ENCODE measurements at regions of chr15 and their contacts with region 1.

Region 1: DNA sequence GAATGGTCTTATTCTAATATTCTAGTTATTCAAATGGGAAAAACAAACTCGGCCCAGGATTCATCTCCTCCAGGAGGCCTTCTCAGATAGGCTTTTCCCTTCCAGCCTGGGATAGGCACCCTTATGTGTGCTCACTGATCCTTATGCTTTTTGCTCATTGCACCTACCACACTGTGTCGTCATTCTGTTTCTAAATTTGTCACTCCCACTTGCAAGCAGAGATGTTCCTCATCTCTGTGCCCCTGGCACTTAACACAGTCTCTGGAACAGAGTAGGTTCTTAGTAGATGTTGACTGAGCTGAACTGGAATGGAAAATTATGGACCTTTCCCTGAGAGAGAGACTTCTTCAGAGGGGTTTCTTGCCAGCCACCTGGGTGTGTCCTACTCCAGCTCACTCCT is 18.7 kb upstream of the SPG11 start:
- DNase-seq: no peak
- ATAC-seq: peak; percentile 26
- H3K4me3 Mint-ChIP-seq: peak overlapping the region; percentile 60
- H3K27ac Mint-ChIP-seq: peak overlapping the region; percentile 91
- H3K4me1 Mint-ChIP-seq: peaks cover 76% of the 10 kb centered on the region
- H3K27me3 Mint-ChIP-seq: no peaks in the 10 kb centered on the region
- CTCF ChIP-seq: no peak

Region 2: GRCh38 chr15:44397869-44398268 is 284.3 kb before region 1 on chr15:
- CTCF ChIA-PET with region 1: no interaction called
- POLR2A ChIA-PET with region 1: no interaction called
- intact Hi-C with region 1: no loop called
- DNase-seq: no peak
- ATAC-seq: no peak
- H3K4me3 Mint-ChIP-seq: no peak overlapping the region
- H3K27ac Mint-ChIP-seq: no peak overlapping the region
- H3K4me1 Mint-ChIP-seq: peaks cover 2% of the 10 kb centered on the region
- H3K27me3 Mint-ChIP-seq: no peaks in the 10 kb centered on the region
- CTCF ChIP-seq: no peak

Region 3: GRCh38 chr15:44532689-44533088 is 149.5 kb before region 1 on chr15:
- CTCF ChIA-PET with region 1: no interaction called
- POLR2A ChIA-PET with region 1: no interaction called
- intact Hi-C with region 1: no loop called
- DNase-seq: no peak
- ATAC-seq: no peak
- H3K4me3 Mint-ChIP-seq: no peak overlapping the region
- H3K27ac Mint-ChIP-seq: peak overlapping the region; percentile 41
- H3K4me1 Mint-ChIP-seq: peaks cover 15% of the 10 kb centered on the region
- H3K27me3 Mint-ChIP-seq: no peaks in the 10 kb centered on the region
- CTCF ChIP-seq: no peak

Region 4: GRCh38 chr15:44670491-44670890 is 11.7 kb before region 1 on chr15:
- CTCF ChIA-PET with region 1: interaction called, 13 read pairs
- POLR2A ChIA-PET with region 1: interaction called, 60 read pairs
- intact Hi-C with region 1: no loop called
- DNase-seq: no peak
- ATAC-seq: peak; percentile 14
- H3K4me3 Mint-ChIP-seq: peak overlapping the region; percentile 42
- H3K27ac Mint-ChIP-seq: peak overlapping the region; percentile 95
- H3K4me1 Mint-ChIP-seq: peaks cover 88% of the 10 kb centered on the region
- H3K27me3 Mint-ChIP-seq: no peaks in the 10 kb centered on the region
- CTCF ChIP-seq: no peak